OCI-LY7 (cell line): ENCODE measurements at regions of chr11 and their contacts with region 1.

Region 1: DNA sequence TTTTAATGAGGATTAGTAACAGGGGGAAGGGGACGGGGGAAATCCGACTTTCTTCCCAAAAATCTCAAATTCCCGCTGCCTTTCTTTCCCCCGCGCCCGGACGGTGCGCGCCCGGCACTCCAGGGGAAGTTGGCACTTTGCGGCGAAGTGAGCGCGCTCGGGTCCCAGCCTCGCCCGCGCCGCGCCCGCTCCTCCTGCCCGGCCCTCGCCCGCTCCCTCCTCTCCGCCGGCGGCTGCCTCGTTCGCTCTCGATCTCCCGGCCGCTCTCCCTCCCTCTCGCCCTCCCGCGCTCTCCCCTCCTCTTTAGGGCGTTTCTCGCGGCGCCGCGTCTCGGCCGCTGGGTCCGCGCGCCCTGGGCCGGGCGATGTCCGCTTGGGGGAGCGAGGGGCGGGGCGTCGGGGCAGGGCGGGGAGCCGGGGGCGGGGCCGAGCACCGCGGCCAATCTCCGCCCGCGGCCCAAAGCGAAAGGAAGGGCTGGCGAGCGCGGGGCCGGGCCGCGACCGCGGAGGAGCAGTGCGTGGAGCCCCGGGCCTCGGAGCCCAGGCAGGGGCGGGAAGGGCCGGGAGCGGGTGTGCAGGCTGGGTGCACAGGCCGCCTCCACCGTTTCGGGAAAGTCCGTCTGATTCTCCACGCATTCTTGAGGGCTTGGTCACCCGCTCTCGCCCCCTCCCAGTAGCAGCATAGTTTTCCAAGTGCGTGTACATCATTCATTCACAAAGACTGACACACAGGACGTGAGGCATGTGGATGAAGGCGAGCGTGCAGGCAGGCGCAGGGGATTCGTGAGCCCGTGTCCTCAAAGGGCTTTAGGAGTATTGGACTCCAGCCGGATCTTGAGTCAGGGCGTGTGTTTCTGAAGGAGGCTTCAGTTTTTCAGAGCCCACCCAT is 65.1 kb downstream of the ETS1 start:
- DNase-seq: peak; percentile 93
- H3K4me3 ChIP-seq: peak overlapping the region; percentile 98
- H3K27ac ChIP-seq: peak overlapping the region; percentile 79
- H3K4me1 ChIP-seq: peaks cover 44% of the 10 kb centered on the region
- CTCF ChIP-seq: no peak

Region 2: GRCh38 chr11:128066399-128066798 is 455.9 kb before region 1 on chr11:
- CTCF ChIA-PET with region 1: no interaction called
- POLR2A ChIA-PET with region 1: no interaction called
- intact Hi-C with region 1: no loop called
- DNase-seq: no peak
- H3K4me3 ChIP-seq: no peak overlapping the region
- H3K27ac ChIP-seq: no peak overlapping the region
- H3K4me1 ChIP-seq: no peaks in the 10 kb centered on the region
- CTCF ChIP-seq: no peak

Region 3: DNA sequence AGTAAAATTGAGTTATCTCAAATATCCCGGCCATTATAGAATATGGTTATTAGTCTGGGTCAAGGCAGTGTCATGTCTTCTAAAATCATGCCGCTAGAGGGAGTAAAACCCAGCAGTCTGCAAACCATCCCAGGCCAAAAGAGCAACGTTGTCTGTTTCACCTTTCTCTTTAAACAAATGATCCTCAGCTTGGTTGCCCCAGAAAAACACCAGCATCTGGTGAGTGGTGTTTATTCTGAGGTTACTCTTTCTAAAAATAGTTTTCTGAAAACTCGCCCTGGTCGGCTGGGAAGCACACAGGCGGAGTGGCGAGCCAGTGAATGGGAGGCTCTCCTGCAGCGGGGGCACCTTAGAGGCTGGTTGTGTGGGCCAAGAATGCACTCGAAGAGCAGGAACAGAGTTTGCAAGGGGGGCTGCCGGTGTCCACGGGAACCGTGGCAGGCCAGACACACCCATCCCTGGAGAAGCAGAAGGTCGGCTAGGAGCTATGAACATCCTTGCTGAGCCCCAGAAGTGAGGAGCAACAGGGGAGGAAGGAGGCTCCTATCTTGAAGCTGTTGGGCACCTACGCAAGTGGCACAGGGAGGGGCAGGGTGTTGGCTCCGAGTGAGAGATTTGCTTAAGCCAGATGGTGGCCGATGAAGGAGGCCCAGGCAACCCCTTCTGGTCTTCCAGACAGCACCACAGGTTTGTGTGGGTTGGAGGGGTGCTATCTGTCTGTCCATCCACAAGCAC is 232.0 kb before region 1 on chr11:
- CTCF ChIA-PET with region 1: no interaction called
- POLR2A ChIA-PET with region 1: no interaction called
- intact Hi-C with region 1: loop called (anchors 1 kb)
- DNase-seq: peak; percentile 92
- H3K4me3 ChIP-seq: peak overlapping the region; percentile 43
- H3K27ac ChIP-seq: peak overlapping the region; percentile 63
- H3K4me1 ChIP-seq: peaks cover 35% of the 10 kb centered on the region
- CTCF ChIP-seq: peak; percentile 99

Region 4: GRCh38 chr11:128342511-128343134 is 179.7 kb before region 1 on chr11:
- CTCF ChIA-PET with region 1: no interaction called
- POLR2A ChIA-PET with region 1: no interaction called
- intact Hi-C with region 1: no loop called
- DNase-seq: peak; percentile 42
- H3K4me3 ChIP-seq: no peak overlapping the region
- H3K27ac ChIP-seq: no peak overlapping the region
- H3K4me1 ChIP-seq: peaks cover 8% of the 10 kb centered on the region
- CTCF ChIP-seq: no peak

Region 5: DNA sequence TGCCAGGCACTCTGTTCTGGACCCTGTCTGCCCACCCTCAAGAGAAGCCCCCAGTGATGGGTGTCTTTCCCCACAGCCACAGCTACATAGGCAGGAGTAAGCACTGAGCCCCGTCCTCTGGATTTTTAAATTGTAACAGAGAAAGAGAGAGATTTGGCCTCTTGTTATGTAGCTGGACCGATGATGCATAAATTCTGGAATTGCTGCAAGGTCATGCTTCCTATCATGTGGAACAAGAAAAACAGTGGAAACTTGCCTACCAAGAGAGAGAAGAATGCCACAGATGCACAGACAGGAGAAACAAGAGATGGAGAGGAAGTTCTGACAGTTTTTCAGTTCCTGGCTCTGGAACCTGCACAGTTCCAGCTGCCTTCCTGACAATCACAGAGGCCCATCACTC is 85.2 kb before region 1 on chr11:
- CTCF ChIA-PET with region 1: no interaction called
- POLR2A ChIA-PET with region 1: no interaction called
- intact Hi-C with region 1: no loop called
- DNase-seq: no peak
- H3K4me3 ChIP-seq: no peak overlapping the region
- H3K27ac ChIP-seq: no peak overlapping the region
- H3K4me1 ChIP-seq: no peaks in the 10 kb centered on the region
- CTCF ChIP-seq: no peak

Region 6: GRCh38 chr11:128506999-128507611 is 15.2 kb before region 1 on chr11:
- CTCF ChIA-PET with region 1: interaction called, 4 read pairs
- POLR2A ChIA-PET with region 1: interaction called, 42 read pairs
- intact Hi-C with region 1: no loop called
- DNase-seq: no peak
- H3K4me3 ChIP-seq: no peak overlapping the region
- H3K27ac ChIP-seq: no peak overlapping the region
- H3K4me1 ChIP-seq: peaks cover 94% of the 10 kb centered on the region
- CTCF ChIP-seq: no peak

Region 7: GRCh38 chr11:128552783-128553661 is 30.7 kb after region 1 on chr11:
- CTCF ChIA-PET with region 1: interaction called, 10 read pairs
- POLR2A ChIA-PET with region 1: interaction called, 119 read pairs
- intact Hi-C with region 1: loop called (anchors 1 kb)
- DNase-seq: peak; percentile 97
- H3K4me3 ChIP-seq: peak overlapping the region; percentile 61
- H3K27ac ChIP-seq: peak overlapping the region; percentile 97
- H3K4me1 ChIP-seq: peaks cover 80% of the 10 kb centered on the region
- CTCF ChIP-seq: no peak

Region 8: DNA sequence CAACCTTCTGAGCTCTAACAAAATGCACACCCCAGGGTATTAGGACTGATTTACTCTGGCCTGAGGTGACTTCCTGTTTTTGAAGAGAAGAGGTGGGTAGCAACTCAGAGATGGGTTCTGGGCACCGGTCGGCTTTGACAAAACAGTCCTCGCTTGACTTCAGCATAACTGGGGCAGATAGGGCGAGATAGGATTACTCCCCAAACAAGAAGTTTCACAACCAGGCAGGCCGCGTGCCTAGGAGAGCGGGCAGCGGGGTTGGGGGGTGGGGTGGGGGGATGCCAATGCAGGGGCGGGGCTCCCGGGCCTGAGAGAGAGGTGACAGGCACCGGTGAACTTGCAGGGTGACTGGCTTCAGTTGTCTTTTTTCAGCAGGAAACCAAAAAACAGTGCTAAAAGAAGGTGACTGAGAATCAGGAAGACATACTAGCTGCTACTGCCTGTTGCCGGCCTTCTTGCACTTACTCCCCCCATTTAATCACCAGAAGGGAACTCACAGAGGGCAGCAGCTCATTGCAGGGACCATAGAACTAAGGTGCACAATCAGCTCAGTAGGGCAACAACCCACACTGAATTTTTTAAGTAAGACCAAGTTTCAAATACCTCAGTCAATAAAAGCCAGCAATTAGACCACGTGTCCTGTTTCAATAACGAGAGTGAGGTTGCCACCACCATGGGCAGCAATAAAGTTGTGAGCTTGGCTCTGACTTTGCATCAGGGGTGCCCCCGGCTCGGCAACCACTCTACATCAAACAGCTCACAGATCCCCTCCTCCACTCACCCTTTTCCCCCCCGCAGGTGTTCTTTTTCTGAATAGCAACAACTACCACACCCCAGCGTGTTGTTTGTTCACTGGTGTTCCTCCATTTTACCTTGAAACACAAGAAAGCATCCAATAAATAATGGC is 102.2 kb after region 1 on chr11:
- CTCF ChIA-PET with region 1: interaction called, 4 read pairs
- POLR2A ChIA-PET with region 1: interaction called, 169 read pairs
- intact Hi-C with region 1: loop called (anchors 1 kb)
- DNase-seq: peak; percentile 90
- H3K4me3 ChIP-seq: peak overlapping the region; percentile 46
- H3K27ac ChIP-seq: peak overlapping the region; percentile 97
- H3K4me1 ChIP-seq: peaks cover 100% of the 10 kb centered on the region
- CTCF ChIP-seq: no peak

Region 9: GRCh38 chr11:128981254-128981653 is 459.0 kb after region 1 on chr11:
- CTCF ChIA-PET with region 1: no interaction called
- POLR2A ChIA-PET with region 1: no interaction called
- intact Hi-C with region 1: no loop called
- DNase-seq: no peak
- H3K4me3 ChIP-seq: no peak overlapping the region
- H3K27ac ChIP-seq: no peak overlapping the region
- H3K4me1 ChIP-seq: no peaks in the 10 kb centered on the region
- CTCF ChIP-seq: no peak

Region 10: DNA sequence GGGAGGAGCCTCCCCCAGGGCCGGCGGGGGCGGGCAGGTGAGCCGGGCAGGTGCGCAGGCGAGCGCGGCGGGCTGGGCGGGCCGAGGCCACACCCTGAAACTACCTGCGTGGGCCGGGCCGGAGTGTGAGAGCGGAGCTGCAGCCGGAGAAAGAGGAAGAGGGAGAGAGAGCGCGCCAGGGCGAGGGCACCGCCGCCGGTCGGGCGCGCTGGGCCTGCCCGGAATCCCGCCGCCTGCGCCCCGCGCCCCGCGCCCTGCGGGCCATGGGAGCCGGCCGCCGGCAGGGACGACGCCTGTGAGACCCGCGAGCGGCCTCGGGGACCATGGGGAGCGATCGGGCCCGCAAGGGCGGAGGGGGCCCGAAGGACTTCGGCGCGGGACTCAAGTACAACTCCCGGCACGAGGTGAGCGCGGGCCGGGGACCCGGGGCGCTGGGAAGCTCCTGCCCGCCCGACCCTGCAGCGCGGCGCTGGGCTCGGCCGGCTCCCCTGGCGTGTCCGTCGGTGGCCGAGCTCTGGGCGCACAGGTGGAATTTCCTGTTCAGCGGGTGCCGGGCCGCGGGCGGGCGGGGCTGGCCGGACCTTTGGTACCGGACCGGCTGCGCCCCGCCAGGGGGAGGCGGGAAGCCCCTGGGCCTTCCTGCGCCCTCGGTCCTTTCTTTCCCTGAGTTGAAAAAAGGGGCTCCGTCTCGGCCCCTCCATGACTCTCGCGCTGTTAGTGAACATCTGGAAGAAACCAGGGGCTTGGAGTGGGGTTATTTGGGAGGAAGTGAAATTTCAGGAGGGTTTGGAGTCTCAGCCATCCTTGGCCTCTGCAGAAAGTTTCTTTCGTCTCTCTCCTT is 1637.6 kb after region 1 on chr11 and contains the start of gene ST14:
- CTCF ChIA-PET with region 1: no interaction called
- POLR2A ChIA-PET with region 1: no interaction called
- intact Hi-C with region 1: loop called (anchors 5 kb)
- DNase-seq: peak; percentile 70
- H3K4me3 ChIP-seq: peak within 1 kb of the TSS; percentile 74
- H3K27ac ChIP-seq: peak within 1 kb of the TSS; percentile 93
- H3K4me1 ChIP-seq: peaks cover 76% of the 10 kb centered on the region
- CTCF ChIP-seq: no peak; the same call in 1 of the 2 replicates
- total RNA-seq, gene ST14: 110 and 135 TPM in 2 replicates